PC-9 (cell line): ENCODE measurements at regions of chr13 and their contacts with region 1.

Region 1: DNA sequence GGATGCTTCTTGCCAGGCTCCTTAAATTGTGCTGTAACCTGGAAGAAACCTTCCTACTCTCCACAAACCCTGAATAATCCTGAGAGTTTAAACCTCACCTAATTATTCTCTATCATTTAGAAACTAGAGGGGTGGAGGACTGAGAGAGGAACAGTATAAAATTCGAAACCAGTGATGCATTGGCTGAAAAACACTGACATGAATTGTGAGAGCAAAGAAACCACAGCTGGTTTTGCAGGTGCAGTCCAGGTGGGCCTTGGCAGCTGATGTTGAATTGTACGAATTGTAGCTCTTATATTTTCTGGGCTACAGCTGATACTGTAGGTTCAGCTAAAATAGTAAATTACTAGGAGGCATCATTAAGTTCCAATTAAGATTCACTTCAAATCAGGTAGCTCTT is 227.0 kb upstream of the SLITRK5 start:
- DNase-seq: no peak
- H3K4me3 ChIP-seq: no peak overlapping the region
- H3K27ac ChIP-seq: no peak overlapping the region
- H3K4me1 ChIP-seq: no peaks in the 10 kb centered on the region
- H3K27me3 ChIP-seq: no peaks in the 10 kb centered on the region
- CTCF ChIP-seq: no peak

Region 2: GRCh38 chr13:87322386-87322785 is 121.7 kb before region 1 on chr13:
- CTCF ChIA-PET with region 1: interaction called, 16 read pairs
- POLR2A ChIA-PET with region 1: no interaction called
- intact Hi-C with region 1: no loop called
- DNase-seq: no peak
- H3K4me3 ChIP-seq: no peak overlapping the region
- H3K27ac ChIP-seq: no peak overlapping the region
- H3K4me1 ChIP-seq: no peaks in the 10 kb centered on the region
- H3K27me3 ChIP-seq: no peaks in the 10 kb centered on the region
- CTCF ChIP-seq: no peak

Region 3: GRCh38 chr13:87398047-87398446 is 46.1 kb before region 1 on chr13:
- CTCF ChIA-PET with region 1: no interaction called
- POLR2A ChIA-PET with region 1: no interaction called
- intact Hi-C with region 1: no loop called
- DNase-seq: no peak
- H3K4me3 ChIP-seq: no peak overlapping the region
- H3K27ac ChIP-seq: no peak overlapping the region
- H3K4me1 ChIP-seq: no peaks in the 10 kb centered on the region
- H3K27me3 ChIP-seq: no peaks in the 10 kb centered on the region
- CTCF ChIP-seq: no peak